Activated CD8-positive, alpha-beta T cell treated with anti-CD3 and anti-CD28 coated beads, Interleukin-2, amount 10 ng/mL, durations not matched to agents 7 days and 5 days (primary cell): ENCODE measurements at regions of chr1 and their contacts with region 1.

Region 1: DNA sequence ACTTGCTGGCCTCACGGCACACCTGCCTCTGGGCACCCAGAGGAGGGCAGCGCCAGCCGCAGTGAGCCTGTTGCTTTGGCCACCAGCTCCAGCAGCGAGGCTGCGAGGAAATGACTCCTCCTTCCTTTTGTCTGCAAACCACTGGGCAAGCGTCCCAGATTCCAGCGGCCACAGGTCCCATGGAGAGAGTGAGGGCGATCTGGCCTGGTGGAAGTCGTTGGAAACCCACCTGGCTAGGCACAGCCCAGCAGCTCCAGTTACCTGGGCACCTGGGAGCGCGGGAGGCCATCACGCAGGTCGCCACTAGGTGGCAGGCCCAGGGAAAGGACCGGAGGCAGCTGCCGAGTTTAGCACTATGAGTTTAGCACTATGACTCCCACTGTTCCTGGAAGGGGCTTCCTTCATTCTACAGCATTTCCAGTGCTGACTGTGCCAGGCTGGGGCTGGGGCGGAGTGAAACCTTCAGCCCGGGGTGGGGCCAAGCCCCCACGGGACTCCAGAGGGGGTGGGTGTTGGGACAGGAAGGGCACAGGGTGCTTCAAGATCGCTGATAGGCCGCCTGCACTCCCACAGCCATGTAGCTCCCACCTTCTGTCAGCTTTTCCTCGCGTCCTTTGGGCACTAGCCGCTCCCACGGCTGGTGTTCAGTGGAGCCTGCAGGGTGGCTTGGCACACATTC is 1.1 kb upstream of the ESPN start:
- DNase-seq: peak; percentile 75
- ATAC-seq: peak; percentile 65
- H3K4me3 Mint-ChIP-seq: no peak overlapping the region
- H3K27ac Mint-ChIP-seq: no peak overlapping the region
- H3K4me1 Mint-ChIP-seq: peaks cover 15% of the 10 kb centered on the region
- H3K27me3 Mint-ChIP-seq: peaks cover 48% of the 10 kb centered on the region

Region 2: GRCh38 chr1:6359216-6360116 is 64.0 kb before region 1 on chr1:
- CTCF ChIA-PET with region 1: interaction called, 11 read pairs
- POLR2A ChIA-PET with region 1: no interaction called
- DNase-seq: peak; percentile 80
- ATAC-seq: peak; percentile 85
- H3K4me3 Mint-ChIP-seq: peak overlapping the region; percentile 74
- H3K27ac Mint-ChIP-seq: peak overlapping the region; percentile 91
- H3K4me1 Mint-ChIP-seq: peaks cover 58% of the 10 kb centered on the region
- H3K27me3 Mint-ChIP-seq: no peaks in the 10 kb centered on the region

Region 3: DNA sequence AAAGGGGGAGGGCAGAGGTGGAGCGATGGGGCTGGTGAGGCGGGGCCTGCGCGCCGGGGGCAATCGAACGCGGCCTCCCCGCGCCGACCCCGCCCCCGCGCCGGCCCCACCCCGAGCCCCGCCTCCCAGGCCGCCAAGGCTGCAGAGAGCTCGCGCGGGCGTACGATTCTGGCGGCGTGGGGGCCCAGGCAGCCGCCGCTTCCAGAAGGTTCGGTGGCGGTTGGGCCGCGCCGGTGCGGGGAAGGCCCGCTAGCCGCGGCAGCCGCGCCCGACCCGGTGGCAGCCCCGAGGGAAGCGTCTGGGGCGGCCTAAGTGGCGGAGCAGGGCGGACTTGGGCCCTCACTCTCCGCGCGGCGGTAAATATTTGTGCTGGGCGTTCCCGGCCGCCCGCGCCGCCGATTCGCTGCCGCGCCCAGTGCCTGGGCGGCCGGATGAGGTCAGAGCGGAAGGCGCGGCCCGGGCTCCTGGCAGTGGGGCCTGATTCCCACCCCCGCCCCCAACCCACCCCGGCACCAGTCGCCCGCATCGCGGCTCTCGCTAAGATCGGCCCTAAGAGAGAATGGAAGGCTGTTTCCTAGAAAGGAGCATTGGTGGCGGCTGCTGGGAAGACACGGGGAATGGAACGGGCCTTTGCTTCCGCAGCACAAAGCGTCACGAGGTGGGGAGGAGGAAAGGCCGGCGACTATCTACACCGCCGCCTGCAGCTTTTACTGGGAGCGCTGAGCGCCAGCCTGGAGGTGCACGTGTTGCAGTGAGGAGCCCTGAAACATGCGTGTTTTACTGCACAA is 29.9 kb before region 1 on chr1 and contains the start of gene ACOT7:
- CTCF ChIA-PET with region 1: interaction called, 20 read pairs
- POLR2A ChIA-PET with region 1: no interaction called
- DNase-seq: peak; percentile 93
- ATAC-seq: peak; percentile 87
- H3K4me3 Mint-ChIP-seq: peak within 1 kb of the TSS; percentile 82
- H3K27ac Mint-ChIP-seq: peak within 1 kb of the TSS; percentile 96
- H3K4me1 Mint-ChIP-seq: peaks cover 43% of the 10 kb centered on the region
- H3K27me3 Mint-ChIP-seq: peaks cover 3% of the 10 kb centered on the region
- total RNA-seq, gene ACOT7: 97.0 to 102 TPM

Region 4: DNA sequence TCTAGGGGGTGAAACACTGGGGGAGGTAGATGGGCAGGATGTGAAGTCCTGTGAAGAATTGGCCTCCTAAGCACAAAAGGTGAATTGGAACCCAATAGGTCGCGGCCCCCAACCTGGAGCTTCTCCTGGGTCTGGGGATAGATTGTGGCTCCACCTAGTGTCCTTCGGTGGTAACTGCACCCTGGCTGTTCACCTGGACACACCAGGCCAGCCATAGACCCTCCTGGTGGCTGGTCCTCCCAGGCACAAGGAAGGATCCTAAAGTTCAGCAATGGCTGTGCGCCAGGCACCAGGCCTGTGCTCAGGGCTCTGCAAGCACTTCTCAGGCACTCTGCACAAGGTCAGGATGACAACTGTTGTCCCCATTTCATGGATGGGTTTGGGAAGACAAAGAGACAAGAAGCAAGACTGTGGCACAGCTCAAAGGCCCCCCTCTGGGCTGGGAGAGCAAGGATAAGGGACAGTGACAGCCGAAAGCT is 14.6 kb after region 1 on chr1:
- CTCF ChIA-PET with region 1: interaction called, 103 read pairs
- POLR2A ChIA-PET with region 1: no interaction called
- DNase-seq: peak; percentile 80
- ATAC-seq: peak; percentile 67
- H3K4me3 Mint-ChIP-seq: no peak overlapping the region
- H3K27ac Mint-ChIP-seq: no peak overlapping the region
- H3K4me1 Mint-ChIP-seq: peaks cover 2% of the 10 kb centered on the region
- H3K27me3 Mint-ChIP-seq: peaks cover 24% of the 10 kb centered on the region

Region 5: DNA sequence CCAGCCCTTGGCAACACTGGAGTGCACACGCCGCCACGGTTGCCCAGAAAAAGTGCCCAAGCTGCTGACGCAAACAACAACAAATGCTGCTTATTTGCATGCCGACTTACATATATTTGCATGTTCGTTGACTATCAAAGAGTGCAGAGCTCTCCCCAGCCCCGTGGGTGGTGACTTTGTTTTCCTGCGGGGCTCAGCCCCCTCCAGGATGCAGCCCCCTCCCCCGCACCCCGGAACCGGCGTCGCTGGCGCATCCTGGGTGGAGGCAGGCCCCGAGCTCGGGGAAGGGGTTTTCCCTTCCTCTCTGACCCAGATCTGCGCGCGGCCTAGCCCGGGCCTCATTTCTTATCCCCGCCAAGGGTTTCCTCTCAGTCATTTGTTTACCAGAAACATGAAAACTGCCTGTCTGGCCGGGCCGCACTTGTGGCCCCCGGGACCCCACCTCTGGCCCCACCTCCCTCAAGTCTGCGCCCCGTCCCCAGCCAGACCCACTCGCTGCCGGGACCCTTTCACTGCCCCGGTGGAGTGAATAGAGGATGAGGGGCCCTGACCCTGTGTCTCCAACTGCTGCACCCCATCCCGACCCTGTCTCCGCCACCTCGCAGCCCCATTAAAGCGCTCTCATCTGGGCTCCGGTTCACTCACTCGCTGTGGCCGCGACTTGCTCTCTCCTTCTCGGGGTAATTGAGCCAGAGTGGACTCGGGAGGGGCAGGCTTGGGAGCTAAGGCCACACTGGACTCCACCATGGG is 37.0 kb after region 1 on chr1:
- CTCF ChIA-PET with region 1: interaction called, 15 read pairs
- POLR2A ChIA-PET with region 1: no interaction called
- DNase-seq: peak; percentile 81
- ATAC-seq: peak; percentile 75
- H3K4me3 Mint-ChIP-seq: peak overlapping the region; percentile 73
- H3K27ac Mint-ChIP-seq: peak overlapping the region; percentile 86
- H3K4me1 Mint-ChIP-seq: peaks cover 54% of the 10 kb centered on the region
- H3K27me3 Mint-ChIP-seq: peaks cover 19% of the 10 kb centered on the region

Region 6: DNA sequence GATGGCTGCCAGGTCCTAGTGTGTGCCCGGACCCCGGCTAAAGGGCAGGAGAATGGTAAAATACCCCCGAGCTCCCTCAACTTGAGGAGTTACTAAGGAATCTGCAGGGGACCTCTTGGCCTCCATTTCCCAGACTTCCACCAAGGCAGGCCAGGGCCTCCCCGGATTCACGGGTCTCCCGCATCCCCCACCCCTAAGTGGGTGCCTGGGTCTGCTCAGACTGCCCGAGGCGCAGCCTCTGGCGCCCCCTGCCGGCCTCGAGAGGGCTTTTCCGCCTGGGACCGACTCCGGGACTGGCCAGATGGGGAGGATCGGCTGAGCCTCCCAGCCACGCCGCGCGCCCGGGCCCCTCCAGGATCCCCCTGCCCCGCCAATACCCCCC is 66.3 kb after region 1 on chr1:
- CTCF ChIA-PET with region 1: interaction called, 18 read pairs
- POLR2A ChIA-PET with region 1: no interaction called
- DNase-seq: peak; percentile 83
- ATAC-seq: peak; percentile 79
- H3K4me3 Mint-ChIP-seq: peak overlapping the region; percentile 76
- H3K27ac Mint-ChIP-seq: peak overlapping the region; percentile 71
- H3K4me1 Mint-ChIP-seq: peaks cover 33% of the 10 kb centered on the region
- H3K27me3 Mint-ChIP-seq: peaks cover 18% of the 10 kb centered on the region